IMR-90 (cell line): ENCODE measurements at regions of chr3 and their contacts with region 1.

Region 1: GRCh38 chr3:146544002-146544928 is at the start of gene PLSCR1:
- DNase-seq: peak; percentile 93
- ATAC-seq: peak; percentile 97
- H3K4me3 ChIP-seq: peak within 1 kb of the TSS; percentile 95
- H3K27ac ChIP-seq: peak within 1 kb of the TSS; percentile 89
- H3K4me1 ChIP-seq: peaks cover 7% of the 10 kb centered on the region; the same call in 1 of the 2 replicates
- H3K27me3 ChIP-seq: no peaks in the 10 kb centered on the region
- CTCF ChIP-seq: no peak
- POLR2A ChIP-seq: peak; percentile 74
- RAD21 ChIP-seq: no peak
- total RNA-seq, gene PLSCR1: 5.6 and 11.7 TPM in 2 replicates

Region 2: GRCh38 chr3:146148468-146148931 is 395.8 kb before region 1 on chr3:
- CTCF ChIA-PET with region 1: no interaction called
- POLR2A ChIA-PET with region 1: no interaction called
- dilution Hi-C with region 1: no loop called
- in situ Hi-C with region 1: no loop called
- intact Hi-C with region 1: no loop called
- DNase-seq: peak; percentile 47
- ATAC-seq: peak; percentile 79
- H3K4me3 ChIP-seq: no peak overlapping the region
- H3K27ac ChIP-seq: no peak overlapping the region
- H3K4me1 ChIP-seq: peaks cover 11% of the 10 kb centered on the region
- H3K27me3 ChIP-seq: no peaks in the 10 kb centered on the region
- CTCF ChIP-seq: peak; percentile 34
- POLR2A ChIP-seq: no peak
- RAD21 ChIP-seq: peak; percentile 37

Region 3: GRCh38 chr3:146313411-146314111 is 230.7 kb before region 1 on chr3:
- CTCF ChIA-PET with region 1: no interaction called
- POLR2A ChIA-PET with region 1: no interaction called
- dilution Hi-C with region 1: no loop called
- in situ Hi-C with region 1: no loop called
- intact Hi-C with region 1: no loop called
- DNase-seq: peak; percentile 90
- ATAC-seq: peak; percentile 92
- H3K4me3 ChIP-seq: no peak overlapping the region
- H3K27ac ChIP-seq: no peak overlapping the region
- H3K4me1 ChIP-seq: peaks cover 4% of the 10 kb centered on the region; the same call in 1 of the 2 replicates
- H3K27me3 ChIP-seq: no peaks in the 10 kb centered on the region
- CTCF ChIP-seq: no peak
- POLR2A ChIP-seq: no peak
- RAD21 ChIP-seq: no peak

Region 4: GRCh38 chr3:146469150-146470017 is 74.9 kb before region 1 on chr3 and contains the start of gene PLSCR2:
- CTCF ChIA-PET with region 1: interaction called, 3 read pairs
- POLR2A ChIA-PET with region 1: no interaction called
- dilution Hi-C with region 1: no loop called
- in situ Hi-C with region 1: no loop called
- intact Hi-C with region 1: loop called (anchors 1 kb)
- DNase-seq: no peak
- ATAC-seq: no peak
- H3K4me3 ChIP-seq: peak within 1 kb of the TSS; percentile 32
- H3K27ac ChIP-seq: no peak within 1 kb of the TSS
- H3K4me1 ChIP-seq: peaks cover 4% of the 10 kb centered on the region
- H3K27me3 ChIP-seq: no peaks in the 10 kb centered on the region; the same call in 1 of the 2 replicates
- CTCF ChIP-seq: no peak
- POLR2A ChIP-seq: no peak
- RAD21 ChIP-seq: no peak
- total RNA-seq, gene PLSCR2: not detected in 2 replicates

Region 5: DNA sequence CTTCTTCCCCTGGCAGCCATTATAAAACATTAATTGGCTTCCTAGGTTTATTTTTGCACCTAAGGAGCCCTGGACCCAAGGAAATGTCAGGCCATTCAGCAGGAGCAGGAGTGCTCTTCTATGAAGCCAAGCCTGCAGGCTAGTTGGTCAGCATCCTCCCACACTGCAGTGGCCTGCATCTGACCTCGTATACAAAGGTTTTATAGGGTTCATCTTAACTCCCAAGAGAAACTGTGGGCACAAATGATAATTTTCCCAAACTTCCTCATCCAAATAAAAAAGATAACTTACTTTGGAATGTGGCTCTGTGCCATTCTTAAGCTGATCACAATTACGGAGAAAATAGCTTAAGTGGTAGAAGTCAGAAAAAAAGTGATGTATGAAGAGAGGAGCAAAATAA is 19.3 kb before region 1 on chr3:
- CTCF ChIA-PET with region 1: no interaction called
- POLR2A ChIA-PET with region 1: no interaction called
- dilution Hi-C with region 1: no loop called
- in situ Hi-C with region 1: no loop called
- intact Hi-C with region 1: loop called (anchors 2 kb)
- DNase-seq: no peak
- ATAC-seq: no peak
- H3K4me3 ChIP-seq: no peak overlapping the region
- H3K27ac ChIP-seq: no peak overlapping the region
- H3K4me1 ChIP-seq: peaks cover 10% of the 10 kb centered on the region
- H3K27me3 ChIP-seq: no peaks in the 10 kb centered on the region
- CTCF ChIP-seq: no peak
- POLR2A ChIP-seq: no peak
- RAD21 ChIP-seq: no peak